ENCODE measurements at regions of chr12 and their contacts with region 1.

Region 1: DNA sequence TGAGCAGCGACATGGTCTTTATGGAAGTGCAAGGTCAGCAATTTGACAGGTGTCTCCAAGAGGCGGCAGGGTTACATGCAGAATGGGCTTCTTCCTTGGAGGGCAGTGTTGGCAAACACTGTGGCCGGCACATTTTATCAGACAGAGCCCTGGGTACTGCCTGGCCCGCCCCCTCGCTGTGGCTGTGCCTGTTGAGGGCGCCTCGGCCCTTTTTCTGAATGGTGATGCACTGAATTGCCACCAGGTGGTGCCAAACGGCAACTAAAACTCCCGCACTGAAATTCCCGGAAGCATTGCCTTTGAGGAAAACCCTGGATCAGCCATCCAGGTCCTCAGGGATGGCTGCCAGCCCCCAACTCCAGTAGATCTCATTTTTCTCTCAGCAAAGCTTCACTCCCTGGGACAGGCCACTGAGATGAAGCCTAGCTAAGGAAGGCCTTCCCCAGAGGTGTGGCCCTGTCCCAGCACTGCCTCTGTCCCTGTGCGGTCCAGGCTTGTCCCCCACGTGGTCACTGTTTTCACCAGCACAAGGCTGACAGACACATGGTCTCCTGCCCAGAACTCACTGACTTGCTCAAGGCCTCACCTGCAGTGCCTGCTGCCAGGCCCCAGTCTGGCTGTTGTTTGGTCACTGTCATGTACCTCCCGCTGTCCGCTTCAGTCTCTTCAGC is 73.6 kb downstream of the TESC start:
- DNase-seq: peak; percentile 29
- ATAC-seq: peak; percentile 98
- H3K4me3 ChIP-seq: no peak overlapping the region
- H3K27ac ChIP-seq: no peak overlapping the region
- H3K4me1 ChIP-seq: no peaks in the 10 kb centered on the region
- H3K27me3 ChIP-seq: no peaks in the 10 kb centered on the region
- CTCF ChIP-seq: peak; percentile 88 to 98 (median 88)
- POLR2A ChIP-seq: no peak
- RAD21 ChIP-seq: peak; percentile 95

Region 2: GRCh38 chr12:117119592-117120198 is 94.1 kb after region 1 on chr12:
- CTCF ChIA-PET with region 1: interaction called, 8 read pairs
- POLR2A ChIA-PET with region 1: interaction called, 3 read pairs
- RAD21 ChIA-PET with region 1: no interaction called
- intact Hi-C with region 1: loop called (anchors 1 kb)
- DNase-seq: peak; percentile 51
- ATAC-seq: peak; percentile 96
- H3K4me3 ChIP-seq: no peak overlapping the region
- H3K27ac ChIP-seq: no peak overlapping the region
- H3K4me1 ChIP-seq: peaks cover 3 to 4% of the 10 kb centered on the region in 2 experiments; a peak in 2 of 4 replicates
- H3K27me3 ChIP-seq: no peaks in the 10 kb centered on the region
- CTCF ChIP-seq: peak; percentile 81 to 93 (median 87)
- POLR2A ChIP-seq: no peak
- RAD21 ChIP-seq: peak; percentile 94

Region 3: DNA sequence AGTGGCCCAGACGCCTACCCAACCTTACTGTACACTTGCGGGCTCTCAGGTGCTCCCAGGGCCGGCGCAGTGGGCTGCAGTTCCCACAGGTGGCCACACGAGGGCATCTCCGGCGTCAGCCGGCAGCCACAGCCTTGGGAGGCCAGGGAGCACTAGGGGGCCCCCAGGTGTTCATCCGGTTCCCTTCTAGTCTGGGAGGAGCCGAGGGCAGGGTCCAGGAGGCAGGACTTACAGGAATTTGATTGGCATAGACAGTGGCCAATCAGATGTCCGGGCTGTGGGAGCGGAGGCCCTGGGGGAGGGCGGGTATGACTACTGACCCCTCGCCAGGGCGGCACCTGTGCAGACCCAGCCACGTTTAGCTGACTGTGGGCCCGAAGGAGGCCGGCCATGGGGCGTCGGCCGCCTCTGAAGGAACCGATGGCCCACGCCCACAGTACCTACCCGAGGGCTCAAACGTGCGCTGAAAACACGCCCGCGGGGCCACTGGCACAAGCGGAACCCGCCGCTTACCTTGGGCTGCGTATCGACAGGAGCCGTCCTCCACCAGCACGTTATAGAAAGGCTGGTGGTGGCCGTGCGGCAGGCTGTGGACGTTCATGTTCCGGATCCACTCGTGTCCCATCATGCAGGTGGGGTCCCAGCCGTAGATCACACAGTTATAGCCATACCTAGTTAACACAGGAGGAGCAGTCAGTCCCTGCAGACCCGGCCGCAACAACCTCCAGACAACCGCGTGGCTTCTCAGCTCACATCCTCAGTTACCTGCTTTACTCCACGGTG is 129.9 kb after region 1 on chr12:
- CTCF ChIA-PET with region 1: no interaction called
- POLR2A ChIA-PET with region 1: no interaction called
- RAD21 ChIA-PET with region 1: no interaction called
- intact Hi-C with region 1: loop called (anchors 1 kb)
- DNase-seq: peak; percentile 95
- ATAC-seq: peak; percentile 99
- H3K4me3 ChIP-seq: no peak overlapping the region
- H3K27ac ChIP-seq: no peak overlapping the region
- H3K4me1 ChIP-seq: no peaks in the 10 kb centered on the region
- H3K27me3 ChIP-seq: no peaks in the 10 kb centered on the region
- CTCF ChIP-seq: peak; percentile 93 to 99 (median 98)
- POLR2A ChIP-seq: no peak
- RAD21 ChIP-seq: peak; percentile 56